ENCODE measurements at regions of chr14 and their contacts with region 1.

Region 1: GRCh38 chr14:89954070-89955028 is at the start of gene EFCAB11:
- DNase-seq: peak; percentile 95
- H3K4me3 Mint-ChIP-seq: peak within 1 kb of the TSS; percentile 95
- H3K27ac Mint-ChIP-seq: peak within 1 kb of the TSS; percentile 93
- H3K4me1 Mint-ChIP-seq: peaks cover 58% of the 10 kb centered on the region
- H3K27me3 Mint-ChIP-seq: no peaks in the 10 kb centered on the region
- total RNA-seq, gene EFCAB11: 6.0 and 8.2 TPM in 2 replicates

Region 2: GRCh38 chr14:88005978-88006851 is 1948.1 kb before region 1 on chr14:
- intact Hi-C with region 1: loop called (anchors 5 kb)
- DNase-seq: peak; percentile 68
- H3K4me3 Mint-ChIP-seq: peak overlapping the region; percentile 93
- H3K27ac Mint-ChIP-seq: peak overlapping the region; percentile 94
- H3K4me1 Mint-ChIP-seq: peaks cover 70% of the 10 kb centered on the region
- H3K27me3 Mint-ChIP-seq: no peaks in the 10 kb centered on the region

Region 3: DNA sequence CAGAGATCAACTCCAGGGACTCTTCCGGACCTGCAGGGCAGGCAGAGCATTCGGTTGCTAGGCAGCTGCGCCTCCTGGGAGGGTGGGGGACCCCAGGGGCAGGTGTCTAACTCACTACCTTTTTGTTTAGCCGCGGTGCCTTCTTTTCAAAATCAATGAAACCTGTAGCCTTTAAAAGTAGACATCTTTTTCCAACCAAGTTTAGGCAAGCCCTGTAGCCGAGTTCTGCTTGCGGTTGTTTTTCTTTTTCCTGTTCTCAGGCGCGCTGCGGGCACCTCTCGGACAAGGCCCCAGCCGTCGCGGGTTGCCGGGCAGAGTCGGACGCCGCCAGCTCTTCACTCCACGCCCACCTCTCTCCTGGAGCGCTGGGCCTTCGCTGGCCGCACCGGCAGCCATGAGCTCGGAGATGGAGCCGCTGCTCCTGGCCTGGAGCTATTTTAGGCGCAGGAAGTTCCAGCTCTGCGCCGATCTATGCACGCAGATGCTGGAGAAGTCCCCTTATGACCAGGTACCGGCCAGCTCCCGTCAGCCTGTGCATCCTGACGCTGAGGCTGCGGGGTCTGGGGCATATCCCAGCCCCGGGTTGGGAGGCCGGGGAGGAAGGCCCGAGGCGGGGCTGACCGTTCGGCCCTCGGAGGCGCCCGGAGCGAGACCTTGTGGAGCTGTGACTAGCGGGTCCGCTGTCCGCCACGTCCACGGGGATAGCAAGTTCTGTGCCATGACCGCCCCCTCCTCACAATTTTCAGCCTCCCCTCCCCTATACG is 1129.9 kb before region 1 on chr14 and contains the start of gene TTC8:
- intact Hi-C with region 1: loop called (anchors 10 kb)
- DNase-seq: peak; percentile 74
- H3K4me3 Mint-ChIP-seq: peak within 1 kb of the TSS; percentile 84
- H3K27ac Mint-ChIP-seq: peak within 1 kb of the TSS; percentile 93
- H3K4me1 Mint-ChIP-seq: peaks cover 14% of the 10 kb centered on the region
- H3K27me3 Mint-ChIP-seq: peaks cover 15% of the 10 kb centered on the region
- total RNA-seq, gene TTC8: 3.5 and 4.6 TPM in 2 replicates

Region 4: GRCh38 chr14:89779712-89780111 is 174.6 kb before region 1 on chr14:
- intact Hi-C with region 1: no loop called
- DNase-seq: no peak
- H3K4me3 Mint-ChIP-seq: no peak overlapping the region
- H3K27ac Mint-ChIP-seq: no peak overlapping the region
- H3K4me1 Mint-ChIP-seq: no peaks in the 10 kb centered on the region
- H3K27me3 Mint-ChIP-seq: peaks cover 10% of the 10 kb centered on the region

Region 5: GRCh38 chr14:89922031-89922907 is 32.1 kb before region 1 on chr14:
- intact Hi-C with region 1: no loop called
- DNase-seq: no peak
- H3K4me3 Mint-ChIP-seq: no peak overlapping the region
- H3K27ac Mint-ChIP-seq: no peak overlapping the region
- H3K4me1 Mint-ChIP-seq: no peaks in the 10 kb centered on the region
- H3K27me3 Mint-ChIP-seq: peaks cover 4% of the 10 kb centered on the region

Region 6: DNA sequence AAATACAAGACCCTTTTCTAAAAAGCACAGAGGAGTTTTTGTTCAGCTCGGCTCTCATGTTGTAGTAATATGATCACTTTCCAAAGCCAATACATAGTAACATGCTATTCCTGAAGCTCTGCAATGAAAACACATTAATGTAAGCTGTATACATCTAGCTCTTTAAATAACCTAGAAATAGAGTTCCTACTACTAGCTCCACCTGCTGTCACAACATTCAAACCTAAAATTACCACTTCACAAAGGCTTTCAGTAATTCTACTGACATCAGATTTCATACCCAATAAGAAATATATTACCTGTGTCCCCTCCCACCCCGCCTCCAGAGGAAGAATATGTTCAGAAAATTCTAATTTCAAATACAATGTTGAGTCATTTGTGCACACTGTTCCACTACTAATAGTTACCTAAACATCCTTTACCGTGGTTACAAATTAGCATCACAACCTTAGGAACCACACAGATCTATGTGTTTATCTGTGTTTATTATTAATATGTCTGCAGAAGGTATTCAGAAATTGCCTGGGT is 17.6 kb before region 1 on chr14:
- intact Hi-C with region 1: no loop called
- DNase-seq: no peak
- H3K4me3 Mint-ChIP-seq: no peak overlapping the region
- H3K27ac Mint-ChIP-seq: no peak overlapping the region
- H3K4me1 Mint-ChIP-seq: no peaks in the 10 kb centered on the region
- H3K27me3 Mint-ChIP-seq: peaks cover 2% of the 10 kb centered on the region

Region 7: DNA sequence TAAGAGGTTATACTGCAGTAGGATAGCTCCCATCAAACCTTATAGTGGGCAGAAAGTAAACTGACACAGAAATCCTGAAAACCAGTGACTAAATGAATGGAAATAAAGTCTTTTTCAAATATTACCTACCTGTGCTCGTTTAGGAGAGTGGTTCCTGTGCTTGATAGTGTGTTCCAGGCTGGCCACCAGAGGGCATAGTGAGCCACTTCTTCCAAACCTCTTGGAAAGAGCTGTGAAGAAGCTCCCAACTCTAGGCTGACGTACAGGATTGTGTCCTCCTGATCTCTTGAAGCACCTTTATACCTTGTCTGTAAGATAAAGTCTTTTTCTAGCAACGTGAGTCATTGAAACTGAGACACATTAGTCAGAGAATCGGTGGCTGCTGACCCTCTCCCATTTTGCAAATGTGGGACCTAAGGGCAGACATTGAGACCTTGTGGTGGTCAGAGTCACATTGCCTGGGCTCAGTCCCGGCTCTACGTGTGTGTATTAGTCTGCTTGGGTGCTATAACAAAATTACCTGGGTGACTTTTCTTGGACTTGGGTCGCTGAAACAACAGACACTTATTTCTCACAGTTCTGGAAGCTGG is 19.0 kb after region 1 on chr14:
- intact Hi-C with region 1: loop called (anchors 1 kb)
- DNase-seq: peak; percentile 25
- H3K4me3 Mint-ChIP-seq: no peak overlapping the region
- H3K27ac Mint-ChIP-seq: no peak overlapping the region
- H3K4me1 Mint-ChIP-seq: peaks cover 5% of the 10 kb centered on the region
- H3K27me3 Mint-ChIP-seq: no peaks in the 10 kb centered on the region

Region 8: GRCh38 chr14:90256354-90257131 is 302.2 kb after region 1 on chr14 and contains the start of gene PSMC1:
- intact Hi-C with region 1: loop called (anchors 1 kb)
- DNase-seq: peak; percentile 83
- H3K4me3 Mint-ChIP-seq: peak within 1 kb of the TSS; percentile 99
- H3K27ac Mint-ChIP-seq: peak within 1 kb of the TSS; percentile 93
- H3K4me1 Mint-ChIP-seq: peaks cover 22% of the 10 kb centered on the region
- H3K27me3 Mint-ChIP-seq: peaks cover 6% of the 10 kb centered on the region
- total RNA-seq, gene PSMC1: 171 and 176 TPM in 2 replicates

Region 9: GRCh38 chr14:90399541-90400444 is 445.4 kb after region 1 on chr14:
- intact Hi-C with region 1: loop called (anchors 1 kb)
- DNase-seq: peak; percentile 79
- H3K4me3 Mint-ChIP-seq: peak overlapping the region; percentile 96
- H3K27ac Mint-ChIP-seq: peak overlapping the region; percentile 73
- H3K4me1 Mint-ChIP-seq: peaks cover 70% of the 10 kb centered on the region
- H3K27me3 Mint-ChIP-seq: peaks cover 2% of the 10 kb centered on the region